MCF 10A (cell line): ENCODE measurements at regions of chr2 and their contacts with region 1.

Region 1: DNA sequence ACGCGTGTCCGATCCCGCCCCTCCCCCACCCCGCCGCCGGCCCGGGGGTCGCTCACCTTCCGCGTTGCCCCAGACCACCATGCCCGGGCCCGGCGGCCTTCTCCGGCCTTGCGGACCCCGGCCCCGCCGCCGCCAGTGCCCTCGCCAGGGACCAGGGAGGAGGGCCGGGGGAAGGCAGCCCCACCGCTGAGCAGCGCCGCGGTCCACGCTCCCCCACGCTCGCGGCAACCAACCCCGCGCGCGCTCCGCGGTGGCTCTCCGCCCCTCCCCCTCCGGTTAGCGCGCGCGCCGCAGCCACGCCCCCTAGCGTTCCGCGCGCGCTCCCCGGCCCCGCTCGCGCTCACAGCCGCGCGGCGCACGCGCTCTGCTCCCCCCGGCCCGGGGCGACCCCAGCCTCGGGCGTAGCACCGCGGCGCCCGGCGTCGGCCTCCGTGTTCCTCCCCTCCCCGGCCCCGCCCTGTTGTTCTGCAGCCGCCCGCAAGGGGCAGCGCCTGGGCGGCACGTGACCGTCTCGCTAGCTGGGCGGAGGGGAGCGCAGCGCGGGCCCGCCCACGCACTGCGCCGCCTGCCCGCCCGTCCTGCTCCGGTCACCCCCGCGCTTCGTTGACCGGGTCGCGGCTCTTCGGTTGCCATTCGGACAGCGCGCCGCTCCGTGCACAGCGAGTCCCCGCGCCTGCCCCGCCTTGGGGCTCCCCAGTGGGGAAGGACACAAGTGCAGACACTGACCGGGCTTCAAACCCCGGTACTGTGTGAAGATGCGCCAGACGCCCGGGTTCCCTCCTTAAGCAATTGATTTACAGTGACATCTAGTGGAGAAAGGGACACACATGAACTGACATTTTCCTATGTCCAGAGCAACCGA is at the start of gene REV1:
- DNase-seq: peak; percentile 92
- H3K4me3 Mint-ChIP-seq: peak within 1 kb of the TSS; percentile 89
- H3K27ac Mint-ChIP-seq: peak within 1 kb of the TSS; percentile 93
- H3K4me1 Mint-ChIP-seq: peaks cover 15% of the 10 kb centered on the region
- H3K27me3 Mint-ChIP-seq: no peaks in the 10 kb centered on the region
- CTCF ChIP-seq: peak; percentile 46
- total RNA-seq, gene REV1: 33.2 and 38.6 TPM in 2 replicates

Region 2: DNA sequence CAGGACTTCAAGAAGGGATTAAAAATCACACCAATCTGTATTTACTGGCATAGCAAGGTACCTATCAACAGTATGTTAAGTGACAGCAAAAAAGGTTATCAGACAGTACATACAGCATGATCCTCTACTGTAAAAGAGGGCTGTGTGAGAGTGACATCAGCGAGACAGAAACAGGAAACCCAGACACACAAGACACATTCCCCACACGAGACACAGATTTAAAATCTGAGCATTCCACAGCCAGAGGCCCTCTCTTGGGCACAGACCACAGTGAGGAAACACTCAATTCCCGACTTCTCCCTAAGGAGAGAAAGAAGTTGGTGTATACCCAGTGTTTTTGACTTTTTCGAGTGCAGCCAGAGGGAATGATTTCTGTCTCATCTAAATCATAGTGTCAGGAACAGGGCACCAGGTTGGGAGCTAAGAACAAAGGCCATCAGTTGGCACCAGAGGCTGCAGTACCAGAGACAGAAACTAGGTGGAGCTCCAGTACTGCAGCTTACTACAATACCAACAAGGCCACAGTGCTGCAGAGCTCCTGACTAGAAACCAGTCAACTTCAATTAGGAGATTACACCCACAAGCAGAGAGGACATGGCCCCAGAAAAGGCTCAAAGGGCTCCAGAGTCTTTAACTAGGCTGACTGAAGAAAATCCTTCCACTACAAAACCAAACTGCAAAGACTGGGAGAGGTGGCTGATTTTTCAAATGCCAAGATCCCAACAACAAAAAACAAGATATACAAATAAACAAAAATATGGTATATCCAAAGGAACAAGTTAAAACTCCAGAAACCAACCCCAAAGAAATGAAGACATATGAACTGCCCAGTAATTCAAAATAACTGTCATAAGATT is 840.6 kb before region 1 on chr2:
- CTCF ChIA-PET with region 1: no interaction called
- POLR2A ChIA-PET with region 1: no interaction called
- intact Hi-C with region 1: loop called (anchors 5 kb)
- DNase-seq: peak; percentile 80
- H3K4me3 Mint-ChIP-seq: no peak overlapping the region
- H3K27ac Mint-ChIP-seq: no peak overlapping the region
- H3K4me1 Mint-ChIP-seq: no peaks in the 10 kb centered on the region
- H3K27me3 Mint-ChIP-seq: no peaks in the 10 kb centered on the region
- CTCF ChIP-seq: peak; percentile 97

Region 3: GRCh38 chr2:99154643-99155536 is 335.1 kb before region 1 on chr2 and contains the starts of genes LIPT1 and TSGA10:
- CTCF ChIA-PET with region 1: no interaction called
- POLR2A ChIA-PET with region 1: no interaction called
- intact Hi-C with region 1: loop called (anchors 1 kb)
- DNase-seq: peak; percentile 89
- H3K4me3 Mint-ChIP-seq: no peak within 1 kb of the TSS
- H3K27ac Mint-ChIP-seq: peak within 1 kb of the TSS; percentile 95
- H3K4me1 Mint-ChIP-seq: peaks cover 31% of the 10 kb centered on the region
- H3K27me3 Mint-ChIP-seq: no peaks in the 10 kb centered on the region
- CTCF ChIP-seq: no peak
- total RNA-seq, gene LIPT1: 13.1 TPM in 2 replicates
- total RNA-seq, gene TSGA10: 7.9 and 11.6 TPM in 2 replicates

Region 4: DNA sequence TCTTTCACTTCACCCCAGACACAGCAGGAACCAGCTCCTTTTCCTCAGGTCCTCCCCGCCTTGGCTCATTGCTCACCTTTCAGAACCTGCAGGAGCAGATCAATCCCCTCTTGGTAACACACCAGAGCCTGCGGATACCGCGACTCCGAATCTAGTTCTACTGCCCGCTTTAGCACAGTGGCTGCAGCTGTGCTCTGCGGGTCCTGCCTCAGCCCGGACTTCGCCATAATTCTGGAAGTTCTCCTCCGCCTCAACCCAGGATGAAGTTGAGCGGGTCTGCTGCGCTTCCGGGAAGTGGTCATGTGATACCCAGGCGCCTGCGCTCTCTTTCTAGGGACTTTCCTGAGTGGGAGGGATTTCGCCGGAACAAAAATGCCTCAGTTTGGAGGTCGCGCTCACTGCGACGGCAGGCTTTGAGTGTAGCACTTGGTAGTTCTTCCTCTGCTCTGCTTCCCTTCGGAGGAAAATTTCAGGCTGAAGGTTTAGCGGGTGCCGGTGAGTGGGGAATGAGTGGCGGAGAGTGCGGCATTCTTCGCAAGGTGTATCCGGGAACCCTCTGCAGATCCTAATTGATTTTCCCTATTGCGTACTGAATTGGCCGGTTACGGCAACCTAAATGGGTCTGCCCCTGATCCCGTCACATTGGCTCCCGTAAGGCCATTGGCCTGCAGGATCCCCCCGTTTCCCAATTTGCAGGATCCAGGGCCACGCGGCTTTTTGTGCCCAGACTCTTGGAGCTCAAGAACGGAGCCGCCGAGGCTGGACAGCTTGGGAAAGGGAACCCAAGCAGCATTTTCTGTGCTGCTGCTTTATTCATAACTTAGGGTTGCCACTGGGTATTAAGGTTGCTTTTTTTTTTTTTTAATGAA is 309.0 kb before region 1 on chr2 and contains the starts of genes MITD1 and MRPL30:
- CTCF ChIA-PET with region 1: no interaction called
- POLR2A ChIA-PET with region 1: interaction called, 4 read pairs
- intact Hi-C with region 1: loop called (anchors 1 kb)
- DNase-seq: peak; percentile 96
- H3K4me3 Mint-ChIP-seq: peak within 1 kb of the TSS; percentile 87
- H3K27ac Mint-ChIP-seq: peak within 1 kb of the TSS; percentile 86
- H3K4me1 Mint-ChIP-seq: peaks cover 30% of the 10 kb centered on the region
- H3K27me3 Mint-ChIP-seq: no peaks in the 10 kb centered on the region
- CTCF ChIP-seq: no peak
- total RNA-seq, gene MITD1: 19.1 and 21.2 TPM in 2 replicates
- total RNA-seq, gene MRPL30: 39.1 and 42.5 TPM in 2 replicates

Region 5: GRCh38 chr2:99380376-99381010 is 109.5 kb before region 1 on chr2:
- CTCF ChIA-PET with region 1: no interaction called
- POLR2A ChIA-PET with region 1: no interaction called
- intact Hi-C with region 1: no loop called
- DNase-seq: no peak
- H3K4me3 Mint-ChIP-seq: no peak overlapping the region
- H3K27ac Mint-ChIP-seq: no peak overlapping the region
- H3K4me1 Mint-ChIP-seq: no peaks in the 10 kb centered on the region
- H3K27me3 Mint-ChIP-seq: no peaks in the 10 kb centered on the region
- CTCF ChIP-seq: no peak

Region 6: GRCh38 chr2:99425022-99425421 is 65.0 kb before region 1 on chr2:
- CTCF ChIA-PET with region 1: no interaction called
- POLR2A ChIA-PET with region 1: no interaction called
- intact Hi-C with region 1: loop called (anchors 1 kb)
- DNase-seq: peak; percentile 89
- H3K4me3 Mint-ChIP-seq: no peak overlapping the region
- H3K27ac Mint-ChIP-seq: peak overlapping the region; percentile 31
- H3K4me1 Mint-ChIP-seq: peaks cover 10% of the 10 kb centered on the region
- H3K27me3 Mint-ChIP-seq: no peaks in the 10 kb centered on the region
- CTCF ChIP-seq: no peak

Region 7: DNA sequence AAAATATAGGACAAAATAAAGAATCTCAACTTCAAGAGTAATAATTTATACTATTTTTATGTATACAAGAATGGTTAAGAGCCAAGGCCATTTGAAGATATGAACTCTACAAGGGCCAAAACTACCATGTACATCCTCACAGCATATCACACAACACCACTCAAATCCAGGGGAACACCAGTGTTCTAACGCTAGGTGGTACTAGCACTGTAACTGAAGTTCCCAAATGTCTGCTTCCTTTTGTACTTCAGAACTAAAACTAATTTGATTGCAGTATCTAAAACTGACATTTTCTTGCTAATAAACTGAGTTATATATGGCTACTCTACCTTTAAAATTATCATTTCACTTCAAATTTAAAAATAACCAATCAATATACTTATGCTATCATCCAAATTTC is 47.2 kb before region 1 on chr2:
- CTCF ChIA-PET with region 1: interaction called, 6 read pairs
- POLR2A ChIA-PET with region 1: interaction called, 4 read pairs
- intact Hi-C with region 1: loop called (anchors 1 kb)
- DNase-seq: peak; percentile 32
- H3K4me3 Mint-ChIP-seq: no peak overlapping the region
- H3K27ac Mint-ChIP-seq: no peak overlapping the region
- H3K4me1 Mint-ChIP-seq: peaks cover 6% of the 10 kb centered on the region
- H3K27me3 Mint-ChIP-seq: no peaks in the 10 kb centered on the region
- CTCF ChIP-seq: no peak

Region 8: GRCh38 chr2:99471654-99472599 is 18.1 kb before region 1 on chr2:
- CTCF ChIA-PET with region 1: no interaction called
- POLR2A ChIA-PET with region 1: interaction called, 10 read pairs
- intact Hi-C with region 1: no loop called
- DNase-seq: peak; percentile 54
- H3K4me3 Mint-ChIP-seq: peak overlapping the region; percentile 21
- H3K27ac Mint-ChIP-seq: peak overlapping the region; percentile 73
- H3K4me1 Mint-ChIP-seq: peaks cover 33% of the 10 kb centered on the region
- H3K27me3 Mint-ChIP-seq: no peaks in the 10 kb centered on the region
- CTCF ChIP-seq: no peak